Left cardiac atrium (tissue), 4 donors: ENCODE measurements at regions of chr1 and their contacts with region 1.

Region 1: GRCh38 chr1:8211589-8212442 is 106.1 kb upstream of the SLC45A1 start:
- DNase-seq: peak; percentile 57
- ATAC-seq: peak; percentile 68 to 84

Region 2: GRCh38 chr1:8137481-8138244 is 74.2 kb before region 1 on chr1:
- intact Hi-C with region 1: loop called in 1 of 2 experiments (anchors 10 kb)
- DNase-seq: peak; percentile 30
- ATAC-seq: peak; percentile 41 to 64